Transverse colon (tissue), 4 donors: ENCODE measurements at regions of chr16 and their contacts with region 1.

Region 1: GRCh38 chr16:30166202-30166902 is 17.1 kb upstream of the CORO1A start:
- DNase-seq: no peak
- H3K4me3 ChIP-seq: no peak overlapping the region
- H3K27ac ChIP-seq: no peak overlapping the region
- H3K4me1 ChIP-seq: peaks cover 0 to 3% (median 0%) of the 10 kb centered on the region in 4 donors
- H3K27me3 ChIP-seq: no peaks in the 10 kb centered on the region
- CTCF ChIP-seq: no peak
- EP300 ChIP-seq: no peak
- POLR2A ChIP-seq: no peak

Region 2: DNA sequence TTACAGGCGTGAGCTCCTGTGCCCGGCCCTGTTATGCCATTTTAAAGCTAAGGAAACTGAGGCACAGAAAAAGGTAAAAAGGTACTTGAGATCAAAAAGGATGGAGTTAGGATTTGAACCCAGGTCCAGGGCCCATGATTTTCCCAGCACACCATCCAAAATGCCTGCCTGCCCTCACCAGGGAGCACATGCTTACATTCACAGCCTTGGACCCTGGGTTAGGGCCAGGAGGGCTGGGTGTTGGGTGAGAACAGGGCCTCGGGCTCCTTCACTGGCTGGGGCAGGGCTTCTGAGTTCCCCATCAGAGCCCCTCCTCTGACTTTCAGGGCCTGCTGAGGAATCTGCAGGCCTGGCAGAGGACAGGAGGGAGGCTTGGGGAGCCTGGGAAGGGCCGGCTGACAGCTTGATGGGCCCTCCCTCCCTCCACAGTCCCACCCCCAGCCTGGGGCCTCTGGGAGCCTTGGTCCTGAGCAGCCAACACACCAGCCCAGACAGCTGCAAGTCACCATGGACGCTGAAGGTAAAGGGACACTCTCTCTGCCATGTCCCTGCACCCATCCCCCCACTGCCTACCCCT is 487.6 kb before region 1 on chr16 and contains the start of gene QPRT:
- in situ Hi-C with region 1: loop called in 1 of 4 experiments (anchors 25 kb)
- intact Hi-C with region 1: no loop called
- DNase-seq: peak; percentile 71
- H3K4me3 ChIP-seq: peak within 1 kb of the TSS; percentile 10 to 50 (median 30)
- H3K27ac ChIP-seq: peak within 1 kb of the TSS; percentile 83 to 85 (median 83)
- H3K4me1 ChIP-seq: peaks cover 6 to 42% (median 24%) of the 10 kb centered on the region in 4 donors
- H3K27me3 ChIP-seq: no peaks in the 10 kb centered on the region
- CTCF ChIP-seq: no peak
- EP300 ChIP-seq: no peak
- POLR2A ChIP-seq: no peak
- total RNA-seq, gene QPRT: 14.3 to 65.8 (median 26.3) TPM

Region 3: GRCh38 chr16:29775742-29776408 is 390.5 kb before region 1 on chr16:
- in situ Hi-C with region 1: no loop called
- intact Hi-C with region 1: no loop called
- DNase-seq: no peak
- H3K4me3 ChIP-seq: no peak overlapping the region
- H3K27ac ChIP-seq: peak overlapping the region in 1 of 4 donors; percentile 18
- H3K4me1 ChIP-seq: peaks cover 0 to 1% (median 0%) of the 10 kb centered on the region in 4 donors
- H3K27me3 ChIP-seq: no peaks in the 10 kb centered on the region
- CTCF ChIP-seq: no peak
- EP300 ChIP-seq: no peak
- POLR2A ChIP-seq: no peak

Region 4: GRCh38 chr16:31920373-31920772 is 1754.0 kb after region 1 on chr16:
- in situ Hi-C with region 1: no loop called
- intact Hi-C with region 1: no loop called
- DNase-seq: no peak
- H3K4me3 ChIP-seq: no peak overlapping the region
- H3K27ac ChIP-seq: no peak overlapping the region
- H3K4me1 ChIP-seq: no peaks in the 10 kb centered on the region
- H3K27me3 ChIP-seq: no peaks in the 10 kb centered on the region
- CTCF ChIP-seq: no peak
- EP300 ChIP-seq: no peak
- POLR2A ChIP-seq: no peak